ENCODE measurements at regions of chr7 and their contacts with region 1.

Region 1: DNA sequence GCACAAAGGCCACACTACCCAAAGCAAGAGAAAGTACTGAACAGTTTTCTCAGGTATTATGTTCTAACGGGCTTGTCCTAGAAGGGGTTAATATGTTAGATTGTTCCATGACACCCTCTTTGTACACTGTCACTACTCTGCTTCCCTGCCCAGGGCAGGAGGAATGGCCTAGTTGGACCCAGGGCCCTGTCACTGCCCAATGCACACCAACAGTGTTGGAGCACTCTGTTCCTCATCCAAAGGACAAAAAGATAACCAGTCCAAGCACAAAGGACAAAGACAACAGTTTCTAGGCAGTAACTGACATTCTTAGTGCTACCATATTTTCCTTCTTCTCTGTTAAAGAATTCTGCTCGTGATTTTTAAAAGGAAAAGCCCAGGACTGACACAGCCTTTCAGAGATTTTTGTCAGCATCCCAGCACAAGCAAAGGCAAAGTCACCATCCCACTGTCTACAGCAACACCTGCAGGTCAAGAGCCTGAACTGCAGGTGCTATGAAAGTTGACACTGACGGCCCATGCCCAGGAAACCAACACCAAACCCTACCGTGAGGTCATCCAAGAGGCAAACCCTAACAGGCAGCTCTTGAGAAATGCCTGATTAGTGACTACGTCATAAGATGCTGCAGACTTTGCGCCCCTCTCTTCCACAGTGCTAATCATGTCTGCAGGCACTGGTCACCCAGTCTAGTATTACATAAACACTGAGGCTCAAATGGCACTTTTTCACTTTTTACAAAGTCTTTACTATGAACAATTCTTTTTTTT is 13.2 kb downstream of the NUDCD3 start:
- DNase-seq: peak; percentile 85
- H3K4me3 ChIP-seq: no peak overlapping the region
- H3K27ac ChIP-seq: no peak overlapping the region
- H3K4me1 ChIP-seq: peaks cover 25% of the 10 kb centered on the region
- H3K27me3 ChIP-seq: no peaks in the 10 kb centered on the region
- CTCF ChIP-seq: peak; percentile 98 to 99

Region 2: DNA sequence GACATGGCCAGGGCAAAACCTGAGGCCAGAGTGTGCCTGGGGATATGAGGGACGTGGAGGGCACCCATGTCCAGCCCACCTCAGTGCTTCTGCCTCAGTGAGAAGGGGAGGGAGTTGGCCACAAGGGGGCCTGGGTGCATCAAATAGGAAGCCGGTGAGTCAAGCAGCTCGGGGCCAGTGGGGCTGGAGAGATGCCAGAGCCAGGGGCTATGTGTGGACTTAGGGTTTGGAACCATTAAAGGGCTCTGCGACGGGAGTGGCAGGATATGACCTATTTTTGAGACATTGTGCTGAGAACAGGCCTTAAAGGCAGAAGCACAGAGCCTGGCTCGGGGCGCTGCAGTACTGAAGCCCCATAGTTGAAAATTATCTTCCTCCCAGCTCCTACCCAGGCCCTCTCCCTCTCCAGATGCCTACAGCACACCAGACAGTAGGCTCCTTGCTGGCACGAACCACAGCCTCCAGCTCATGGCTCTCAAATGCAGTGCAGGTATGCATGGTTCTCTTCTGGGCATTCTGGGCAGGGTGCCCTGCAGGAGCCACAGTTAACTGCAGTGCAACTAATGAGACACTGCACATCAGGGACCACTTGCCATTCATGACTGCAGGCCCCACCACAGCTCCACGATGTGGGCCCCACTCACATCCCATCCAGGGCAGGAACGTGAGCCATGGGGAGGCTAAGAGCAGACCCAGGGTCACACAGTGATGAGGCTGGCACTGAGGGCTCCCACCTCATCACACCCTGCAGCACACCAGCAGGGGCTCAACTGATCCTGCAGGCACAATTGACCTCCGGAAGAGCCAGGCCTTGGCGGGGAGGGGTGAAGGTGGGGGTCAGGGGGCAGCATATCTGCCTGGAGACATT is 404.6 kb before region 1 on chr7:
- CTCF ChIA-PET with region 1: no interaction called
- dilution Hi-C with region 1: no loop called
- in situ Hi-C with region 1: no loop called
- intact Hi-C with region 1: loop called (anchors 5 kb)
- DNase-seq: peak; percentile 83
- H3K4me3 ChIP-seq: no peak overlapping the region
- H3K27ac ChIP-seq: no peak overlapping the region
- H3K4me1 ChIP-seq: peaks cover 40% of the 10 kb centered on the region
- H3K27me3 ChIP-seq: no peaks in the 10 kb centered on the region
- CTCF ChIP-seq: peak; percentile 75 to 76

Region 3: GRCh38 chr7:44240983-44241510 is 236.2 kb before region 1 on chr7:
- CTCF ChIA-PET with region 1: interaction called, 4 read pairs
- dilution Hi-C with region 1: no loop called
- in situ Hi-C with region 1: loop called (anchors 10 to 25 kb)
- intact Hi-C with region 1: loop called (anchors 1 kb)
- DNase-seq: peak; percentile 64
- H3K4me3 ChIP-seq: peak overlapping the region in 2 of 3 experiments; percentile 10 to 15
- H3K27ac ChIP-seq: no peak overlapping the region
- H3K4me1 ChIP-seq: peaks cover 8% of the 10 kb centered on the region
- H3K27me3 ChIP-seq: no peaks in the 10 kb centered on the region
- CTCF ChIP-seq: peak; percentile 63 to 87

Region 4: GRCh38 chr7:44348300-44348699 is 128.9 kb before region 1 on chr7:
- CTCF ChIA-PET with region 1: interaction called, 7 read pairs
- dilution Hi-C with region 1: no loop called
- in situ Hi-C with region 1: no loop called
- intact Hi-C with region 1: loop called (anchors 1 kb)
- DNase-seq: no peak
- H3K4me3 ChIP-seq: no peak overlapping the region
- H3K27ac ChIP-seq: no peak overlapping the region
- H3K4me1 ChIP-seq: no peaks in the 10 kb centered on the region
- H3K27me3 ChIP-seq: no peaks in the 10 kb centered on the region
- CTCF ChIP-seq: peak; percentile 23 to 38

Region 5: DNA sequence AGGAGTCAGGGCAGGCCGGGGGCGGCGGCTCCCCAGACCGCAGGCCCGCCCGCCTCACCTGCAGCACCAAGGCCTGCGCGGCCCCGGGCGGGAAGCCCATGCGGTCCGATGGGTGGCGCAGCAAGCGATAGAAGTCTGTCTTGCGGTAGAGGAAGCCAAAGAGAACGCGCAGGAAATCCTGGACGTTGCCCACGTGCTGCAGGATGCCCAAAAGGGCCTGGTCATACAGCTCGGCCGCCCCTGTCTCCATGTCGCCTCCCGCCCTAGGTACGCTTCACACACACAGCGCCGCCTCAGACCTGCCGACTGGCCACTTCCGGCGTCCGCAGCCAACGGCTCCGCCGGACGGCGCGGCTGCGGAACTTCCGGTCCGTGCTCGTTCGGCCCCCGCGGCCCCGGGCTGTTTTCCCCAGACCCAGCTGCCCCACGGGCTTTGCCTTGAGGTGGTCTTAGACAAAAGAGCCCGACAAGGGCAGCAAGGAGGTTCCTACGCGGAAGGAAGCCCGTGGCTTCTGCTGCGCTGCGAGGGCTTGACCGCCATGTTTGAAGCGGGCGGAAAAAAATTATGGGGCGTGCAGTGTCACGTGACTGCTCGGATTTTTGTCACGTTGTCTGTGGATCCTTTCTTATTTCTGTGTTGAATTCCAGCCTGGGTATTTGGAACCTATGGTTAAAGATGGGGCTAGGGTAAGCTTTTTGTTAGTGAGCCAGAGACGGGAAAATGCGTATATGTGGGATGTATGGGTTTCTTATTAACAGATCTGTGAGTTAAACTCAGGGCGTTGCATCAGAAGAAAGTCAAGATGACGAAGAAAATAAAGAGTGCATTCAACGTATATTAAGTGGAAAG is 13.3 kb after region 1 on chr7 and contains the start of gene NUDCD3:
- CTCF ChIA-PET with region 1: interaction called, 12 read pairs
- dilution Hi-C with region 1: no loop called
- in situ Hi-C with region 1: no loop called
- intact Hi-C with region 1: no loop called
- DNase-seq: peak; percentile 87
- H3K4me3 ChIP-seq: peak within 1 kb of the TSS; percentile 68 to 87 (median 83)
- H3K27ac ChIP-seq: peak within 1 kb of the TSS; percentile 97
- H3K4me1 ChIP-seq: peaks cover 19% of the 10 kb centered on the region
- H3K27me3 ChIP-seq: no peaks in the 10 kb centered on the region
- CTCF ChIP-seq: peak in 1 of 2 donors; percentile 32
- total RNA-seq, gene NUDCD3: 77.2 to 122 TPM